ENCODE measurements at regions of chr10 and their contacts with region 1.

Region 1: GRCh38 chr10:97612386-97612785 is 20.9 kb downstream of the MORN4 start:
- DNase-seq: peak in 1 of 2 experiments; percentile 27
- H3K4me3 ChIP-seq: no peak overlapping the region
- H3K27ac ChIP-seq: no peak overlapping the region
- H3K4me1 ChIP-seq: peaks cover 0 to 5% (median 3%) of the 10 kb centered on the region in 4 experiments; a peak in 5 of 7 replicates
- H3K27me3 ChIP-seq: no peaks in the 10 kb centered on the region
- CTCF ChIP-seq: peak in 2 of 3 experiments; percentile 49 to 73; a peak in 3 of 4 replicates
- EP300 ChIP-seq: no peak
- POLR2A ChIP-seq: no peak
- RAD21 ChIP-seq: peak; percentile 83 to 87

Region 2: DNA sequence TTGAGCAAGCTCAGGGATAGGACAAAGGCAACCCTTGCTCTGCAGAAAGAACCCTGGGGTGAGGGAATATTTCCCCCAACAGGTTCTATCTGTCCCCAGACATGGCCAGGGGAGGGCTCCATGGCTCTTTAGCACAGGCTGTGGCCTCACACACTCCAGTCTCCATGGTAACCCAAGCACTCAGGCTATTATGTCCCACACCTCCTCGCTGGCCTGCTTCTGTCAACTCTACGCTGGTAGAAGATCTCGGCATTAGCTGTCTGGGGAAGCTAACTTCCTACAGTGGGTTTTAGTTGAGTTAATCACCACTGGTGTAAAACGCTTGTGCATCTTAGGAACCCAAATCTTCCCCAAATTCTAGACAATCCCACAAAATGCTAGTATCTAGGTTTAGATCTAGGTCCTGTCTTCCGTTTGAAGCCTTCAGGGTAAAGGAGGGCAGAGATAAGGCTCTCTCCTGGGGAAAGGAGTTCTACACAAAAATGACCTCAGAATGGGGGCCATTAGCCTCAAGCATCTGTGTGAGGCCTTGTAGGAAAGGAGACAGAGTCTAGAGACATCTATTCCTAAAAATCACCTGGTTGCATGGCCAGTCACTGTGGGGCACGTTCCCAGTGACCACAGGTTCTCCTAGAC is 389.9 kb before region 1 on chr10:
- CTCF ChIA-PET with region 1: no interaction called
- POLR2A ChIA-PET with region 1: no interaction called
- DNase-seq: peak in 1 of 2 experiments; percentile 17
- H3K4me3 ChIP-seq: no peak overlapping the region; a peak in 1 of 8 replicates
- H3K27ac ChIP-seq: no peak overlapping the region
- H3K4me1 ChIP-seq: peaks cover 0 to 7% (median 4%) of the 10 kb centered on the region in 4 experiments; a peak in 6 of 7 replicates
- H3K27me3 ChIP-seq: no peaks in the 10 kb centered on the region
- CTCF ChIP-seq: peak in 2 of 3 experiments; percentile 23 to 37; a peak in 2 of 4 replicates
- EP300 ChIP-seq: no peak
- POLR2A ChIP-seq: no peak
- RAD21 ChIP-seq: peak; percentile 50; a peak in 3 of 4 replicates

Region 3: GRCh38 chr10:97475936-97476594 is 136.3 kb before region 1 on chr10:
- CTCF ChIA-PET with region 1: interaction called, 22 read pairs
- POLR2A ChIA-PET with region 1: no interaction called
- DNase-seq: no peak
- H3K4me3 ChIP-seq: no peak overlapping the region
- H3K27ac ChIP-seq: no peak overlapping the region
- H3K4me1 ChIP-seq: peaks cover 8 to 13% (median 10%) of the 10 kb centered on the region in 4 experiments; a peak in 6 of 7 replicates
- H3K27me3 ChIP-seq: no peaks in the 10 kb centered on the region
- CTCF ChIP-seq: no peak
- EP300 ChIP-seq: no peak
- POLR2A ChIP-seq: no peak
- RAD21 ChIP-seq: no peak

Region 4: DNA sequence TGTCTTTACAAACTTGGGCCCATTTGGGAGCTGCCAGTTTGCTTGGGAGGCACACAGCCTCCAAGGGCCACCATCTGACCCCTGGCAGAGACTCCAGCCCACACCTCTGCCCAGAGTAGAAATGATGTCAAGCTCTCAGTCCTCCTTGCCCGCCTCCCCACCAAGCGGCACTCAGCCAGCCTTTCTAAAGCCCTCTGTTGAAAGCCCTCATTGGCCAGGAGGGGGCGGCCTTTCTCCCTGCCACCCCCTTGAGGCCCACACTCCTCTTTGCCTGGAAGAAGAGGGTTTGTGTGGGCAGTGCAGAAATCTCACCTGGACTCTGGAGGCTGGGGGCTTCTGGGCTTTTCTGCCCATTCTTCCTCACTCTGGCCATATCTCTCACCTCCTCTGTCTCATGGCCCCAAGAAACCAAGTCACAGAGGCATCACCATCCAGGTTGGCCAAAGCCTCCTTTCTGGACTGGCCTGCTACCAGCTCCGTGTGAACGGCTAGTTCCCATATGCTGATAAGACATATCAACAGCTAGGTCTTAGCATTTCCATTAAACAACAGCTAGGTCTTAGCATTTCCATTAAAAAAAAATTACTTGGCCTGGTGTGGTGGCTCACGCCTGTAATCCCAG is 77.5 kb before region 1 on chr10:
- CTCF ChIA-PET with region 1: interaction called, 50 read pairs
- POLR2A ChIA-PET with region 1: no interaction called
- DNase-seq: peak in 1 of 2 experiments; percentile 79
- H3K4me3 ChIP-seq: no peak overlapping the region
- H3K27ac ChIP-seq: no peak overlapping the region
- H3K4me1 ChIP-seq: peaks cover 0 to 15% (median 8%) of the 10 kb centered on the region in 4 experiments; a peak in 6 of 7 replicates
- H3K27me3 ChIP-seq: no peaks in the 10 kb centered on the region
- CTCF ChIP-seq: peak; percentile 78 to 85 (median 84)
- EP300 ChIP-seq: no peak
- POLR2A ChIP-seq: no peak
- RAD21 ChIP-seq: peak; percentile 67 to 76

Region 5: DNA sequence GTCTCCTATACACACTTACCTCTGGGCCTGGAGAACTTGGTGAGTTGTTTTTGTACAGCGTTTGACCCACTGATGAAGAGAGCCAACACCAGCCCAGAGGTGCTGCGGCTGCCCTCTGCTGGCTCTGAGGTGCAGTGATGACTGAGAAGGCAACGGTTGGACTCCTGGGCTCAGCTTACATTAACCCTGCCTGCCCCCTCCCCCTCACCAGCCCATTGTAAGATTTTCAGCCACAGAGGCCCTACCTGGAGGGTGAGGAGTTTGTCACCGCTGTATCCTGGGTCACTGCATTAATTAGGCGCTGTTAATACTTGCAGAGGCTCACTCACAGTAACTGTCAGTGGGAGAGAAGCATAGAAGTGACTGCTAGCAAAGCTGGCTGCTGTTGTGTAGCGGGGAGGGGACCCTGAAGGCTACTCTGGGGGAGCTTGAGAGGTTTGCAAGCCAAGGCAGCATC is 58.8 kb before region 1 on chr10:
- CTCF ChIA-PET with region 1: interaction called, 39 read pairs
- POLR2A ChIA-PET with region 1: no interaction called
- DNase-seq: peak in 1 of 2 experiments; percentile 81
- H3K4me3 ChIP-seq: peak overlapping the region in 3 of 4 experiments; percentile 30 to 32 (median 31); a peak in 6 of 8 replicates
- H3K27ac ChIP-seq: no peak overlapping the region; the same call in 1 of the 2 replicates
- H3K4me1 ChIP-seq: peaks cover 15 to 29% (median 22%) of the 10 kb centered on the region in 4 experiments
- H3K27me3 ChIP-seq: no peaks in the 10 kb centered on the region
- CTCF ChIP-seq: peak; percentile 89 to 95 (median 95)
- EP300 ChIP-seq: no peak
- POLR2A ChIP-seq: no peak
- RAD21 ChIP-seq: peak; percentile 84 to 88

Region 6: GRCh38 chr10:97584060-97584797 is 28.2 kb before region 1 on chr10 and contains the start of gene HOGA1:
- CTCF ChIA-PET with region 1: interaction called, 24 read pairs
- POLR2A ChIA-PET with region 1: no interaction called
- DNase-seq: peak in 1 of 2 experiments; percentile 65
- H3K4me3 ChIP-seq: no peak within 1 kb of the TSS
- H3K27ac ChIP-seq: no peak within 1 kb of the TSS
- H3K4me1 ChIP-seq: peaks cover 0 to 6% (median 2%) of the 10 kb centered on the region in 4 experiments; a peak in 2 of 7 replicates
- H3K27me3 ChIP-seq: no peaks in the 10 kb centered on the region
- CTCF ChIP-seq: no peak
- EP300 ChIP-seq: no peak
- POLR2A ChIP-seq: no peak
- RAD21 ChIP-seq: no peak
- total RNA-seq, gene HOGA1: 0.28 and 0.29 TPM in 2 replicates

Region 7: DNA sequence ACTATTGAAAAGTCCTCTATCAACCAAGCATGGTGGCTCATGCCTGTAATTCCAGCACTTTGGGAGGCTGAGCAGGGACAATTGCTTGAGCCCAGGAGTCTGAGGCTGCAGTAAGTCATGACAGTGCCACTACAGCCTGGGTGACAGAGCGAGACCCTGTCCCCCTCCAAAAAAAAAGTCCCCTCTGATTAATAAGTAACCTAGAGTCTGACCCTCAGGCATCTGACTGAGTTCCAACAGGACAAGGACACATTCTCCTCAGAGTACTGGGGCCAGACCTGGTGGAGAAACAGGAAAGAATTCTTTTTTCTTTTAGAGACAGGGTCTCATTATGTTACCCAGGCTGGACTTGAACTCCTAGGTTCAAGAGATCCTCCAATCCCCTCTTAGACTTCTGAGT is 10.9 kb after region 1 on chr10:
- CTCF ChIA-PET with region 1: interaction called, 10 read pairs
- POLR2A ChIA-PET with region 1: interaction called, 5 read pairs
- DNase-seq: no peak
- H3K4me3 ChIP-seq: no peak overlapping the region
- H3K27ac ChIP-seq: no peak overlapping the region
- H3K4me1 ChIP-seq: no peaks in the 10 kb centered on the region
- H3K27me3 ChIP-seq: no peaks in the 10 kb centered on the region
- CTCF ChIP-seq: no peak
- EP300 ChIP-seq: no peak
- POLR2A ChIP-seq: no peak
- RAD21 ChIP-seq: no peak

Measured in H1 (cell line).